ENCODE measurements at regions of chr16 and their contacts with region 1.

Region 1: GRCh38 chr16:8892101-8892575 is 10.0 kb downstream of the LITAFD start:
- DNase-seq: no peak
- ATAC-seq: no peak

Region 2: GRCh38 chr16:9012848-9013507 is 120.8 kb after region 1 on chr16:
- intact Hi-C with region 1: loop called (anchors 10 kb)
- DNase-seq: peak; percentile 43
- ATAC-seq: peak; percentile 43

Region 3: GRCh38 chr16:9119795-9120194 is 227.7 kb after region 1 on chr16:
- intact Hi-C with region 1: no loop called
- DNase-seq: no peak
- ATAC-seq: peak; percentile 38